ENCODE measurements at regions of chr10 and their contacts with region 1.

Region 1: DNA sequence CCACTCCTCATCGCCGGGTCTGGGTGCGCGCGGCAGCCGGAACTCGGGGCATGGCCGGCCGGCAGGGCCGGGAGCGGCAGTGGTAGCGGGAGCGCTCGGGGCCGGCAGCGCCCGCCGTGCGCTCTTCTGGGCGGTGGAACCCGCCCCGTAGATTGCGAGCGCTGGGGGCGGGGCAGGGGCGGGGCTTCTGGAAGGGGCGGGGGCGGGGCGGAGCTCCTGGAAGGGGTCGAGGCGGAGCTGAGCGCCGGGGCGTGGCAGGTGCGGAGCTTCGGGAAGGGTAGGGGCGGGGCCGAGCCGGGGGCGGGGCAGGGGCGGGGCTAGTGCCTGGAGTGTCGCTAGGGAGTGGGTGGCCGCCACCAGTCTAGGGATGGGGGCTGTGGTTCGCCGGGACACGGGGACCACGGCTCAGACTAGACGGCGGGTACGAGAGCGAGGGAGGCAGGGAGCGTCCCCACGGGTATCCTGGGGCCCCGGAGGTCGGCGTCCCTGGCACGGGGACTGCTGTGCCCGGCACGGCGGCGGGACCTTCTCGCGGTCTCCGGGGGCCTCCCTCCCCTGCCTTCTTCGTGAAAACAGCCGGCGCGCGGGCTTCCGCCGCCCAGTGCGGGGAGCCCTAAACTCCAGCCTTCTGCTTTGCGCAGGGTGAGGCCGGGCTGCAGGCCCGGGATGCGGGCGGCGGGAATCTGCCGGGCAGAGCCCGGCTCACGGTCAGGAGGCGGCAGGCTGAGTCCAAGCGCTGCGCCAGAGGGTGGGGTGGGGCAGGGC is at the start of gene STK32C:
- DNase-seq: peak; percentile 81
- H3K4me3 Mint-ChIP-seq: peak within 1 kb of the TSS; percentile 90
- H3K27ac Mint-ChIP-seq: peak within 1 kb of the TSS; percentile 38
- H3K4me1 Mint-ChIP-seq: peaks cover 4% of the 10 kb centered on the region
- H3K27me3 Mint-ChIP-seq: peaks cover 31% of the 10 kb centered on the region
- total RNA-seq, gene STK32C: 17.3 and 18.8 TPM in 2 replicates

Region 2: GRCh38 chr10:132185601-132186487 is 122.2 kb before region 1 on chr10:
- intact Hi-C with region 1: loop called (anchors 2 kb)
- DNase-seq: peak; percentile 64
- H3K4me3 Mint-ChIP-seq: peak overlapping the region; percentile 54
- H3K27ac Mint-ChIP-seq: no peak overlapping the region
- H3K4me1 Mint-ChIP-seq: no peaks in the 10 kb centered on the region
- H3K27me3 Mint-ChIP-seq: peaks cover 36% of the 10 kb centered on the region

Region 3: DNA sequence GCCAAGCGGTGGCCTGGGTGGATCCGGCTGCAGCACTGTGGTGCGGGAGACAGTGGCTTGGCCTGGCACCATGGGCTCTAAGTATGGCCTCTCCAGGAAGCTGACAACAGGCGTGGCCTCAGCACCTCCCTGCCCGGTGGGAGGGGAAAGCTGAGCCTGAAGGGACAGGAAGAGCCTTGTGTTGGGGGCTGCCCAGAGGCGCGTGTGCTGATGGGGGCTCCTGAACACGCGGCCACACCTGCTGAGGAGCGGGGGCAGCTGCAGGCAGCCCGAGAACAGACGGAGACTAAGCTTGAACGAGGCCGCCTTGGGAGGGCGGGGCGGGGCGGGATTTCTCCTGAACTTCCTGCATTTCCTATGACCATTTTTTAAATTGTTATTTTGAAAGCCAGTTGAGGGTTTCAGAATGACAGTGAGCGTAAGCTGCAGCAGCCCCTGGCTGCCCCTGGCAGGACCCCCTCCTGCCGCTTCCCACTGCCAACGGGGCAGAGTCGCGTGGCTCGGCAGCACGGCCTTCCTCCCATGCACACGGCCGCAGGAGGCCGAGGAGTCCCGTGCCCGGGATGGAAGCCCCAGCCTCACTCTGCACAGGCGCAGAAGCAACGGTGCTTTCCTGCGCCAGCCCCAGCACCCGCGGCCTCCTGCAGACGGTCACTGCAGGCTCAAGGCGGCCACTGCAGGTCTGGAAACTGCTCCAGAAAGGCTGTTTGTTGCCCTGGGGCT is 78.0 kb before region 1 on chr10:
- intact Hi-C with region 1: loop called (anchors 2 kb)
- DNase-seq: peak; percentile 41
- H3K4me3 Mint-ChIP-seq: peak overlapping the region; percentile 66
- H3K27ac Mint-ChIP-seq: peak overlapping the region; percentile 89
- H3K4me1 Mint-ChIP-seq: peaks cover 24% of the 10 kb centered on the region
- H3K27me3 Mint-ChIP-seq: no peaks in the 10 kb centered on the region

Region 4: GRCh38 chr10:132331526-132332432 is 23.8 kb after region 1 on chr10 and contains the start of gene LRRC27:
- intact Hi-C with region 1: loop called (anchors 1 kb)
- DNase-seq: peak; percentile 99
- H3K4me3 Mint-ChIP-seq: peak within 1 kb of the TSS; percentile 83
- H3K27ac Mint-ChIP-seq: peak within 1 kb of the TSS; percentile 91
- H3K4me1 Mint-ChIP-seq: peaks cover 49% of the 10 kb centered on the region
- H3K27me3 Mint-ChIP-seq: no peaks in the 10 kb centered on the region
- total RNA-seq, gene LRRC27: 2.8 and 3.5 TPM in 2 replicates

Region 5: DNA sequence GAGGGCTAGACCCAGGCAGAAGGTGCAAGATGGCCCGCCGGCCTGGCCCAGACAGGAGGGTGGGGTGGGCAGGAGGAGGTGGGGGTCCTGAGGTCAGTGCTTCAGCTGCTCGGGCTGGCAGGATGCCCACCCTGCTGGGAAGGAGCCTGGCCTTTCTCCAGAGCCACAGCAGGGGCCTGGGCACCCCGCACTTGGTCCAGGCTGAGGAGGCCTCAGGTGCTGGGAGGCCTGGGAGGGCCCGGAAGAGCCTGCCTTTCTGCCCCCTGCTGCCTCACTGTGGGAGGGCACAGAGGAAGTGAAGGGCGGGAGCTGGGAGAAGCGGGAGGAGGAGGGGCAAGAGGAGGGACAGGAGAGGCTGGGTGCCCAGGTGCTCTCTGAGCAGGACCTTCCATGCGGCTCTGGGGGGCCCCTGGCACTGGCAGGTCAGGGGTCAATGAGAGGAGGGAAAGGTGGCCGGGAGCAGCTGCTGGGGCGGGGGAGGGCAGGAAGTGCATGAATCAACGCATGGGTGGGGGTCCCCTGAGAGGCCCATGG is 138.7 kb after region 1 on chr10:
- intact Hi-C with region 1: loop called (anchors 5 kb)
- DNase-seq: peak; percentile 69
- H3K4me3 Mint-ChIP-seq: peak overlapping the region; percentile 66
- H3K27ac Mint-ChIP-seq: peak overlapping the region; percentile 96
- H3K4me1 Mint-ChIP-seq: peaks cover 26% of the 10 kb centered on the region
- H3K27me3 Mint-ChIP-seq: no peaks in the 10 kb centered on the region